PC-3 (cell line): ENCODE measurements at regions of chr7 and their contacts with region 1.

Region 1: DNA sequence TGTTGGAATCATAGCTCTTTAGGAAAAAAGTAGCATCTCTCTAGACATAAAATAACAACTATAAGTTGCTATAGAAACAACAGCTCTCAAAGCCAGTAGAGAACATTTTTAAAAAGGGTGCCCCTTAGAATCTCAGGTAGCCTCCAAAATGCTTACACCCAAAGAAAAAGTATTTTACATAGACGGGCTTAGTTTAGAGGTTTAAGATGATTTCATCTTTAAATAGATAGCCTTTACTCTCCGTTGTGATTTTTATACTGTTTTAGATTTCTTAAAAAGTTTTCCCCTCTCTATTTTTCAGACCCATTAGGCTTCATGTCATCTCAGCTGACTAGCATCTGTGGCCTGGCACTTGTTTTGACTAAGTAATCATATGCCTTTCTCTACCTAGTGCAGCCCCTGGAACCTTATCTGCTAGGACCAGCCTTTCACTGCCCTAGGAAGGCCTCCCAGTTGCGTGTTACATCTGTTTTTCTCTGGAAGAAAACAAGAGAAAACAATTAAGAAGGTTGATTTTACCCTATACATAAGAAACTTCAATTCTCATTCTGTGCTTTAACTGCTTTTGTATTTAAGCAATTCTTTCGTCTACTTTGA is 6.9 kb upstream of the BPGM start:
- DNase-seq: no peak
- ATAC-seq: no peak
- H3K4me3 ChIP-seq: no peak overlapping the region
- H3K27ac ChIP-seq: no peak overlapping the region
- H3K4me1 ChIP-seq: no peaks in the 10 kb centered on the region
- H3K27me3 ChIP-seq: no peaks in the 10 kb centered on the region
- CTCF ChIP-seq: no peak

Region 2: GRCh38 chr7:134470864-134471263 is 168.9 kb before region 1 on chr7:
- CTCF ChIA-PET with region 1: no interaction called
- POLR2A ChIA-PET with region 1: no interaction called
- intact Hi-C with region 1: no loop called
- DNase-seq: peak; percentile 79
- ATAC-seq: peak; percentile 90
- H3K4me3 ChIP-seq: no peak overlapping the region
- H3K27ac ChIP-seq: no peak overlapping the region
- H3K4me1 ChIP-seq: peaks cover 14% of the 10 kb centered on the region
- H3K27me3 ChIP-seq: no peaks in the 10 kb centered on the region
- CTCF ChIP-seq: no peak

Region 3: DNA sequence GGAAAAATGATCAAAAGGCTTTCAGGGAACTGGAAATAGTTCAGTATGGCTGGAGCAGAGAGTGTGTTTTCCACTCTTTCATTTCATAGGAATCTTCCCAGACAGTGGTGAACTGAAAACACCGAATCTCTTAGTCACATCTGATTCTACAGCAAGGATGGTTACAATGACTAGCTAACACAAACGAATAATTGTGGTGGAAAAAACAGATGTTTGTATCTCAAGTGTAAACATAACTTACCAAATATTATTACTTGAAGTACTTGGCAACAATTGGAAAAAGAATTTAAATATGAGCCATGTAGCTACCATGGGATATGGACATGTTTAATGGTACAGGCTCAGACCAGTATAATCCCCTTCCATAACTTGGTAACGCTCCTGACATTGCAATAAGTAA is 14.2 kb before region 1 on chr7:
- CTCF ChIA-PET with region 1: no interaction called
- POLR2A ChIA-PET with region 1: no interaction called
- intact Hi-C with region 1: no loop called
- DNase-seq: peak; percentile 37
- ATAC-seq: peak; percentile 54; the same call in 1 of the 2 replicates
- H3K4me3 ChIP-seq: no peak overlapping the region
- H3K27ac ChIP-seq: peak overlapping the region; percentile 9; the same call in 1 of the 2 replicates
- H3K4me1 ChIP-seq: peaks cover 3% of the 10 kb centered on the region
- H3K27me3 ChIP-seq: no peaks in the 10 kb centered on the region
- CTCF ChIP-seq: no peak

Region 4: DNA sequence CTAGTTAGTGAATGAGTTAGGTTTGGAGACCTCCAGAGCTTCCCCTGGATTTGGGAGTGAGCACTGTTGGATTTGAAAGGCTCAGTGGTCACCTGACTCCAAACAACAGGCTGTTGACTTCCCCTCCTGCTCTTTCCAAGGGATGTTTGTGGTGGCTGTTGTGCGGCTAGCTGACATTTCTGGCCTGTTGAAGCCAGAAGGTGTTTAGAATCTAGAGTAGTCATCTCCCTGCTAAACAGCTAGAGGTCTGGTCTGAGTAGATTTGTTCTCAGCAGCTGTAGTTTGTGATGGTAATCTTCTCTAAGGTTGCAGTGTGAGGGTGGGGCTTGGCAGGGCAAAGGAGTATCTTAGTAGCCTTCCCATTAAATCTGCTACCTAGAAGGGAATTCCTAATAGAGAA is 37.0 kb after region 1 on chr7:
- CTCF ChIA-PET with region 1: no interaction called
- POLR2A ChIA-PET with region 1: interaction called, 16 read pairs
- intact Hi-C with region 1: no loop called
- DNase-seq: no peak
- ATAC-seq: no peak
- H3K4me3 ChIP-seq: no peak overlapping the region
- H3K27ac ChIP-seq: no peak overlapping the region
- H3K4me1 ChIP-seq: no peaks in the 10 kb centered on the region; the same call in 1 of the 2 replicates
- H3K27me3 ChIP-seq: no peaks in the 10 kb centered on the region
- CTCF ChIP-seq: no peak